T-cell (primary cell): ENCODE measurements at regions of chr1 and their contacts with region 1.

Region 1: GRCh38 chr1:161071886-161072371 is 2.2 kb upstream of the ARHGAP30 start:
- DNase-seq: peak in 29 of 35 experiments; percentile 12 to 68 (median 37)
- ATAC-seq: no peak
- H3K4me3 ChIP-seq: no peak overlapping the region
- H3K4me3 Mint-ChIP-seq: no peak overlapping the region
- H3K27ac ChIP-seq: no peak overlapping the region
- H3K27ac Mint-ChIP-seq: peak overlapping the region in 1 of 2 donors; percentile 99
- H3K4me1 ChIP-seq: peaks cover 19 to 41% of the 10 kb centered on the region in 2 experiments
- H3K4me1 Mint-ChIP-seq: peaks cover 38 to 52% (median 41%) of the 10 kb centered on the region in 3 donors
- H3K27me3 ChIP-seq: no peaks in the 10 kb centered on the region
- H3K27me3 Mint-ChIP-seq: no peaks in the 10 kb centered on the region

Region 2: DNA sequence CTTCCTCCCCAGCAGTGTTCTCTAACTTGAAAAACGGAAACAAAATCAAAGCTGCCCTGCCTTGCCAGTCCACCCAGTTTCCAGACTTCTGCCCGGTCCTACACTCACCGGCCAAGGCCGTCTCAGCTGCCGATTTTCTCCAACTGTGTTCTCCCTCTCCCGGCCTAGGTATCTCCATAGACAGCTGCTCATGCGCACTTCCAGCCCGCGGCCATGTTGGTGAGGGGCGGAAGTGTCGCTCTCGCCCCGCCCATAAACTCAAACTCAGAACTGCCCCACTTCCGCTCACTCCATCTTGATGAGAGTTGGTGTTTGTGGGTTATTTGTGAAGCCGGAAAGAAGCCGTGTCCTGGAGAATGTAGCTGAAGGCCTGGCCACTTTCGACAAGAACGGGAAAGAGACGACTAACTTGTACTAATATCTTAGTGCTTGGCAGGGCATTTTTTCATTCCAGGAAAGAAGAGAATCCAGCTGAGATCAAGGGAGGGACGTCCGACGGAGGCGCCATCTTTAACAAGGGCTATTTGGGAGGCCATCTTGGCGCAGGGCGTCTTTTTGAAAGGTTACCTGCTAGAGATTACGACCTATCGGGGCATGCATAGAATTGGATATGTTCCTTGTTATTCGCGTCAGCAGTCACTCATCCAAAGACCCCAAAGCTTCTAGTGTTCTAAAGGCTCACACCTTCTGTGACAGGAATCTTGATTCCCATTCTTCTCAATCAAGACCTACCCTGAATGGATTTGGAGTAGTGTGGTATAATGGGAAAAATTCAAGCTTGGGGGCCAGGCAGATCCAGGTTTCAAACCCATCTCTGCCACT is 26.0 kb before region 1 on chr1 and contains the start of gene USF1:
- CTCF ChIA-PET with region 1: interaction called, 7 to 21 read pairs
- POLR2A ChIA-PET with region 1: interaction called, 10 read pairs
- DNase-seq: peak; percentile 82 to 97 (median 91)
- ATAC-seq: peak; percentile 82 to 85 (median 83)
- H3K4me3 ChIP-seq: peak within 1 kb of the TSS; percentile 95 to 97
- H3K4me3 Mint-ChIP-seq: peak within 1 kb of the TSS; percentile 89 to 98 (median 90)
- H3K27ac ChIP-seq: peak within 1 kb of the TSS; percentile 85
- H3K27ac Mint-ChIP-seq: peak within 1 kb of the TSS; percentile 98 to 100
- H3K4me1 ChIP-seq: peaks cover 14 to 35% of the 10 kb centered on the region in 2 experiments
- H3K4me1 Mint-ChIP-seq: peaks cover 39 to 56% (median 49%) of the 10 kb centered on the region in 3 donors
- H3K27me3 ChIP-seq: no peaks in the 10 kb centered on the region
- H3K27me3 Mint-ChIP-seq: no peaks in the 10 kb centered on the region
- total RNA-seq, gene USF1: 65.4 to 96.1 (median 92.2) TPM

Region 3: GRCh38 chr1:161083743-161084571 is 12.0 kb after region 1 on chr1:
- CTCF ChIA-PET with region 1: interaction called in 1 of 2 experiments, 13 read pairs
- POLR2A ChIA-PET with region 1: no interaction called
- DNase-seq: no peak
- ATAC-seq: no peak
- H3K4me3 ChIP-seq: no peak overlapping the region
- H3K4me3 Mint-ChIP-seq: no peak overlapping the region
- H3K27ac ChIP-seq: no peak overlapping the region
- H3K27ac Mint-ChIP-seq: no peak overlapping the region
- H3K4me1 ChIP-seq: no peaks in the 10 kb centered on the region
- H3K4me1 Mint-ChIP-seq: no peaks in the 10 kb centered on the region
- H3K27me3 ChIP-seq: peaks cover 0 to 5% of the 10 kb centered on the region in 2 experiments
- H3K27me3 Mint-ChIP-seq: no peaks in the 10 kb centered on the region

Region 4: DNA sequence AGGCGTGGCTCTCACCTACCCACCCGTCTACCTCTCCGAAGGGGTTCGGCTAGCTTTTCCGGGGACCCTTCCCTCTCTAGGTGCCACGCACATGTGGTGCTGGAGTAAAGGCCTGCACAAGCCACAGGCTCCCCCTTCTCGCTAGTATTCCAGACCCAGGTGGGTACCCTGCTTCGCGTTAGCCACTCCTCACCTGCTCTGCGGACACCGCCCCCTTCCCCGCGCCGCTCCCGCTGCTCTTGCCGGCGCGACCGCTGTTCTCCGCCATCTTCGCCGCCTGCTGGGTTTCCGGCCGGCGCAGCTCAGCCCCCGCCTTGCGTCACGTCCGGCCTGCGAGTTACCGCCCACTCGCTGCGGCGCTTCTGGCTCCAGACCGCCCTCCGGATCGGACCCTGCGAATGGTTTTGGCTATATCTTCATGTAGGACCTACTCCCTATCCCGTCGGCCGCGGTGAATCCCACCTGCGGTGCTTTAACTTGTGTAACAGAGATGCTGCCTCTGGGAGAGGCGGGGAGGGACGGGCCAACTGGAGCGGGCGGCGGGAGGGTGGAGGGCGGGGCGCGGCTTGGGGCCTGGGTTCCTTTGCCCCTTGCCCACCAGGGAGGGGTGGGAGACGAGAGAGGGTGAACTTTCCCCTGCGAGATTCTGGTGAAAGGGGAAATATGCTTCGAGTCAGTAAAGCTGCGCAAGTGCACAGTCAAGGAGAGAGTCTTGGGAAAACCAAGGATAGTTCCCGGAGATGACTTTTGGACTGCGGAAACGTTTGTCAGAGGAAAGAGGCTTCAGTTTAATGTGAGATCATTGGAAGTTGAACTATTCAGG is 46.0 kb after region 1 on chr1 and contains the starts of genes NIT1 and PFDN2:
- CTCF ChIA-PET with region 1: interaction called in 1 of 2 experiments, 3 read pairs
- POLR2A ChIA-PET with region 1: interaction called, 4 to 10 read pairs
- DNase-seq: peak; percentile 64 to 92 (median 79)
- ATAC-seq: peak; percentile 86 to 89 (median 88)
- H3K4me3 ChIP-seq: peak within 1 kb of the TSS; percentile 90 to 100
- H3K4me3 Mint-ChIP-seq: peak within 1 kb of the TSS; percentile 89 to 96 (median 92)
- H3K27ac ChIP-seq: peak within 1 kb of the TSS; percentile 89
- H3K27ac Mint-ChIP-seq: peak within 1 kb of the TSS; percentile 91 to 93
- H3K4me1 ChIP-seq: peaks cover 22 to 42% of the 10 kb centered on the region in 2 experiments
- H3K4me1 Mint-ChIP-seq: peaks cover 61 to 76% (median 76%) of the 10 kb centered on the region in 3 donors
- H3K27me3 ChIP-seq: no peaks in the 10 kb centered on the region
- H3K27me3 Mint-ChIP-seq: no peaks in the 10 kb centered on the region
- total RNA-seq, gene NIT1: 23.4 to 44.7 (median 41.7) TPM
- total RNA-seq, gene PFDN2: 32.4 to 48.3 (median 42.1) TPM